A549 (cell line): ENCODE measurements at regions of chr2 and their contacts with region 1.

Region 1: GRCh38 chr2:237060534-237061312 is 25.0 kb upstream of the COPS8 start:
- DNase-seq: peak; percentile 49 to 71
- ATAC-seq: peak; percentile 85 to 93; a peak in 5 of 6 replicates
- H3K4me3 ChIP-seq: no peak overlapping the region
- H3K27ac ChIP-seq: peak overlapping the region in 1 of 2 experiments; percentile 58; a peak in 3 of 6 replicates
- H3K4me1 ChIP-seq: no peaks in the 10 kb centered on the region
- CTCF ChIP-seq: peak; percentile 85
- EP300 ChIP-seq: no peak
- POLR2A ChIP-seq: no peak
- RAD21 ChIP-seq: peak; percentile 92 to 95

Region 2: GRCh38 chr2:236343400-236344161 is 717.1 kb before region 1 on chr2:
- CTCF ChIA-PET with region 1: interaction called, 160 read pairs
- POLR2A ChIA-PET with region 1: no interaction called
- DNase-seq: peak; percentile 55 to 79
- ATAC-seq: peak; percentile 47 to 80; a peak in 3 of 6 replicates
- H3K4me3 ChIP-seq: no peak overlapping the region
- H3K27ac ChIP-seq: no peak overlapping the region
- H3K4me1 ChIP-seq: no peaks in the 10 kb centered on the region
- CTCF ChIP-seq: peak; percentile 77
- EP300 ChIP-seq: no peak
- POLR2A ChIP-seq: no peak
- RAD21 ChIP-seq: peak; percentile 59 to 65

Region 3: GRCh38 chr2:236352761-236353593 is 707.7 kb before region 1 on chr2:
- CTCF ChIA-PET with region 1: interaction called, 160 read pairs
- POLR2A ChIA-PET with region 1: no interaction called
- DNase-seq: peak; percentile 13 to 25
- ATAC-seq: peak in 1 of 2 experiments; percentile 56; a peak in 2 of 6 replicates
- H3K4me3 ChIP-seq: no peak overlapping the region
- H3K27ac ChIP-seq: no peak overlapping the region
- H3K4me1 ChIP-seq: no peaks in the 10 kb centered on the region
- CTCF ChIP-seq: peak; percentile 96
- EP300 ChIP-seq: no peak
- POLR2A ChIP-seq: no peak
- RAD21 ChIP-seq: peak; percentile 85 to 93

Region 4: DNA sequence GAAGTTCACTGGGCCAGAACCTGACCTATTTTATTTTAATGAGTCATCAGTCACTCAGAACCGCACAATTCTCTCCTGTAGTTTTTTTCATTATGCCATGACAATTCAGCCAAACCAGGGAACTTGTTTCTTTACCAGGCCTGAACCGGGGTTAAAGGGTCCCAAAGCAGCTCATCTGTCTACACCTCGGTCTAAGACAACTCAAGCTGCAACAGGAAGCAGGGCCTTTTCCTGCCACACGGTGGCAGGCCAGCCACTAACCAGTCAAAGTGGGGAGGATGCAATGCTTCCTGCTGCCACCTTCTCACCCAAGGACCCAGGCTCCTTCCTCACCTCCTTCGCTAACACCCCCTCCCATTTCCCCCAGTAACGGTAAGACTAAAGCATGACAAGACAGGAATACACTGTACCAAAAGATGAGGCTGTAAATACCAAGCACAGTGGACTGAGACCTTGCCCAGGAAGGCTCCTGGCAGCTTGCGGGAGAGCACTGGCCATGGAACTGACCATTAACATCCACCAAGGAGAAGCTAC is 547.8 kb before region 1 on chr2:
- CTCF ChIA-PET with region 1: interaction called, 14 read pairs
- POLR2A ChIA-PET with region 1: no interaction called
- DNase-seq: peak; percentile 28 to 47
- ATAC-seq: peak; percentile 88 to 97
- H3K4me3 ChIP-seq: no peak overlapping the region
- H3K27ac ChIP-seq: peak overlapping the region in 1 of 2 experiments; percentile 28; a peak in 1 of 6 replicates
- H3K4me1 ChIP-seq: no peaks in the 10 kb centered on the region
- CTCF ChIP-seq: peak; percentile 59
- EP300 ChIP-seq: no peak
- POLR2A ChIP-seq: no peak; the same call in 1 of the 2 replicates
- RAD21 ChIP-seq: peak; percentile 65 to 73

Region 5: GRCh38 chr2:237026981-237027711 is 33.6 kb before region 1 on chr2:
- CTCF ChIA-PET with region 1: interaction called, 25 read pairs
- POLR2A ChIA-PET with region 1: no interaction called
- DNase-seq: peak; percentile 29 to 78
- ATAC-seq: peak; percentile 80 to 89
- H3K4me3 ChIP-seq: no peak overlapping the region
- H3K27ac ChIP-seq: peak overlapping the region; percentile 42 to 77; a peak in 5 of 6 replicates
- H3K4me1 ChIP-seq: peaks cover 15% of the 10 kb centered on the region
- CTCF ChIP-seq: peak; percentile 83
- EP300 ChIP-seq: no peak
- POLR2A ChIP-seq: no peak
- RAD21 ChIP-seq: peak; percentile 93 to 98

Region 6: DNA sequence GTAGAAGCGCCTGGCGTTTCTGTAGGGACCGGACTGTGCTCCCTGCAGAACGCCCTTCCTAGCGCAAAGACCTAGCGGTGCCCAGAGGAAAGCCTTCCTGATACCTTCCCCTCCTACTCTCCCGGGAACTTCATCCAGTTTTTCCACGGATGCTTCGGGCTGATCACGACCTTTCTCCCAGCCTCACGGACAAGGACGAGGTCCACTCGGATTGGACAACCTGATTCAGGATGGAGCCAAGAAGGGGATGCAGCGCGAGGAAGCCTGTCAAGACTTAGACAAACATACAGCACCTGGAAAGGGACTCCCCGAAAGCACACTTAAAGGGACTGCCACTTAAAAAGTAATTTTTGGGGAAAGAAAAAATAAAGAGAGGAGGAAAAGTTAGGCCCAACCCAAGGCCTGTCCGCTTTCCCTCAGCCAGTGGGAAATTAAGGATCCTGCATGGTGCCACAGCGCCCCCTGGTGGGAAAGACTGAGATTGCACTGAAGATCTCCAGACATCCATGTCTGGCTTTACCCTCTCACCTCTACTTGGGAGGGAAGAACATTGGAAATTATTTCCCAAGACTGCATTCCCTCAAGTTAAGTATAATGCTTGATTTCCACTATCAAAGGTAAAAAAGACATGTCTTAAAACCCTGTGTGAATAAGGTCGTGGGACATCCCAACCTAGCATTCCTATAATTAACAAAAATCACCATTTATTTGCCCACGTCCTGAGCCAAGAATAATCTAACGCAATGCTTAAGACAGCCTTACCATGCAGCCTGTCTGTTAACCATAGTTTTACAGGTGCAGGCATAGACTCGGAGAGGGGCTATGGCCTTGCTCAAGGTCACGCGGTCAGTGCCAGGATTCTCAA is 11.6 kb after region 1 on chr2:
- CTCF ChIA-PET with region 1: interaction called, 10 read pairs
- POLR2A ChIA-PET with region 1: no interaction called
- DNase-seq: peak; percentile 33 to 59
- ATAC-seq: peak; percentile 73 to 91; a peak in 5 of 6 replicates
- H3K4me3 ChIP-seq: no peak overlapping the region
- H3K27ac ChIP-seq: no peak overlapping the region
- H3K4me1 ChIP-seq: no peaks in the 10 kb centered on the region
- CTCF ChIP-seq: peak; percentile 90
- EP300 ChIP-seq: no peak
- POLR2A ChIP-seq: no peak
- RAD21 ChIP-seq: peak; percentile 84 to 91

Region 7: GRCh38 chr2:237434866-237435311 is 374.2 kb after region 1 on chr2:
- CTCF ChIA-PET with region 1: no interaction called
- POLR2A ChIA-PET with region 1: no interaction called
- DNase-seq: no peak
- ATAC-seq: no peak
- H3K4me3 ChIP-seq: no peak overlapping the region
- H3K27ac ChIP-seq: peak overlapping the region; percentile 31 to 47; a peak in 2 of 6 replicates
- H3K4me1 ChIP-seq: peaks cover 39% of the 10 kb centered on the region
- CTCF ChIP-seq: no peak
- EP300 ChIP-seq: no peak
- POLR2A ChIP-seq: no peak
- RAD21 ChIP-seq: no peak